ENCODE measurements at regions of chr7 and their contacts with region 1.

Region 1: GRCh38 chr7:71735961-71736556 is 604.1 kb downstream of the GALNT17 start:
- DNase-seq: no peak
- H3K4me3 ChIP-seq: no peak overlapping the region
- H3K27ac ChIP-seq: no peak overlapping the region
- H3K4me1 ChIP-seq: peaks cover 0 to 10% (median 4%) of the 10 kb centered on the region in 6 donors
- H3K27me3 ChIP-seq: peaks cover 0 to 8% (median 0%) of the 10 kb centered on the region in 7 donors
- CTCF ChIP-seq: peak; percentile 12 to 83 (median 75)
- POLR2A ChIP-seq: no peak

Region 2: GRCh38 chr7:70856866-70857630 is 879.0 kb before region 1 on chr7:
- intact Hi-C with region 1: loop called (anchors 2 kb)
- DNase-seq: peak; percentile 82
- H3K4me3 ChIP-seq: no peak overlapping the region
- H3K27ac ChIP-seq: no peak overlapping the region
- H3K4me1 ChIP-seq: no peaks in the 10 kb centered on the region
- H3K27me3 ChIP-seq: peaks cover 0 to 20% (median 0%) of the 10 kb centered on the region in 7 donors
- CTCF ChIP-seq: peak; percentile 25 to 85 (median 73)
- POLR2A ChIP-seq: no peak

Region 3: DNA sequence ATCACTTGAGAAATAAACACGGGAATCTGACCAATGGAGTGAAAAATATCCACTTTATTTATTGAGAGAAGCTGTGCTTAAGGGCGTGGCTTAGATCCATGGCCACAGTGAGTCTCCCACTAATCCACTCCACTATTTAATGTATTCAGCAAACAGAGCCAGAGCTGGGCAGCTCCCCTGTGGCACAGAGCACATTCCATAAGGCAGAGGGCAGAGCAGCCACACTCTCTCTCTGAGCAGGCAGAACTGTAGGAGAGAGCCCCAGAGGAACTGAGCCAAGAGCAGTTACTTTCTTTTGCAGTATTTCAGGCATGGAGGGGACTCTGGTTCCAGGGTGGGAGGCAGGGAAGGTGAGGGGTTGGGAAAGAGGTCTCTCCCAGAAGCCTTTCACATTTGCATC is 498.1 kb before region 1 on chr7:
- intact Hi-C with region 1: no loop called
- DNase-seq: no peak
- H3K4me3 ChIP-seq: no peak overlapping the region
- H3K27ac ChIP-seq: no peak overlapping the region
- H3K4me1 ChIP-seq: peaks cover 0 to 6% (median 0%) of the 10 kb centered on the region in 6 donors
- H3K27me3 ChIP-seq: no peaks in the 10 kb centered on the region
- CTCF ChIP-seq: no peak
- POLR2A ChIP-seq: no peak

Measured in spleen (tissue), 13 donors.